ENCODE measurements at regions of chr2 and their contacts with region 1.

Region 1: GRCh38 chr2:218710687-218711549 is at the start of gene TTLL4:
- DNase-seq: peak; percentile 98
- ATAC-seq: peak; percentile 95
- H3K4me3 Mint-ChIP-seq: peak within 1 kb of the TSS; percentile 90
- H3K27ac Mint-ChIP-seq: peak within 1 kb of the TSS; percentile 80
- H3K4me1 Mint-ChIP-seq: peaks cover 52% of the 10 kb centered on the region
- H3K27me3 Mint-ChIP-seq: peaks cover 7% of the 10 kb centered on the region
- total RNA-seq, gene TTLL4: 39.6 to 40.4 TPM

Region 2: DNA sequence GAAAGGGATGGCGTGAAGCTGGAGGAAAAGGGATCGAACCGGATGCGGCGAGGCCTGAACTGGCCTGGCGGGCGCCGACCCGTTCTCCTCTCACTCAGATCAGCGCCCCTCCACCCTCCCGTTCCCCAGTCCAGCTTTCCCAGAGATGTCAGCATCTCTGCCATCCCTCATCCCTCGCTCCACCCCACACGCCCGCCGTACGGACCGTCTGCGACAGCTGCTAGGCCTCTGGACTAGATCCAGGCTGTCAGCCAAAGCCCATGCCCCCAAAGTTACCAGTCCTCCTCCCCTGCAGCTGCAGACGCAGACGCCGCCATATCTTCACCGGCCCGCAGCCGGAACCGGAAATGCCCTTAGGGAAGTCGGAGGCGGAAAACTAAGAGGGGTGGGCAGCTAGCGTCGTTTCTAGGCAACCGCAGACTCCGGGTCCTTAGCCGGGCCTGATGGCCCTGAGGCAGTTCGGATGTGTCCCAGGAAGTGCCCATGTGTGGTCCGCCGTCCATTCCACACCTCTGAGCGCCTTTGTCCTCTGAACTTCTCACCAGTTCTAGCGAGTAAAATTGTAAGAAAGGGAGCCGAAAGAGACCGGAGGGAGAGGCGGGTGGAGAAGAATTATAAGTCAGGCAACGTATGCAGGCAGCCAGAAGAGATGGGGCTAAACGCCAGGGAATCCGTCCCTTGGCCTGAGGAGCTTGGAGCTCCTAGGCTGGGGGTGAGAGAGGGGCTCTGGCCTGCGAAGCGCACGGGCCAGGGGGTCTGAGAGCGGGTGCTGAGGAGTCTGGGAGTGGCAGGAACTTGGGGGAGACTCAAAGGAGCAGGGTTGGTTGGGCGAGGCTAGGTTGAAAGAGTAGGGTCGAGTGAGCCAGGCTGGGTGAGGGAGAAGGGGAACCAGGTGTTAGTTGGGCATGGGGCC is 39.0 kb before region 1 on chr2 and contains the starts of genes RNF25 and STK36:
- CTCF ChIA-PET with region 1: interaction called, 11 read pairs
- DNase-seq: peak; percentile 89
- ATAC-seq: peak; percentile 97
- H3K4me3 Mint-ChIP-seq: peak within 1 kb of the TSS; percentile 98
- H3K27ac Mint-ChIP-seq: peak within 1 kb of the TSS; percentile 91
- H3K4me1 Mint-ChIP-seq: peaks cover 24% of the 10 kb centered on the region
- H3K27me3 Mint-ChIP-seq: no peaks in the 10 kb centered on the region
- total RNA-seq, gene RNF25: 22.0 to 25.7 TPM
- total RNA-seq, gene STK36: 16.8 to 22.4 TPM

Region 3: GRCh38 chr2:218727502-218728165 is 16.7 kb after region 1 on chr2:
- CTCF ChIA-PET with region 1: interaction called, 16 read pairs
- DNase-seq: no peak
- ATAC-seq: no peak
- H3K4me3 Mint-ChIP-seq: no peak overlapping the region
- H3K27ac Mint-ChIP-seq: no peak overlapping the region
- H3K4me1 Mint-ChIP-seq: peaks cover 21% of the 10 kb centered on the region
- H3K27me3 Mint-ChIP-seq: no peaks in the 10 kb centered on the region

Measured in activated CD8-positive, alpha-beta memory T cell treated with anti-CD3 and anti-CD28 coated beads, Interleukin-2, amount 10 ng/mL, durations not matched to agents 7 days and 5 days (primary cell).